Activated CD4-positive, alpha-beta T cell treated with anti-CD3 and anti-CD28 coated beads for 36 hours (primary cell): ENCODE measurements at regions of chr17 and their contacts with region 1.

Region 1: GRCh38 chr17:32253117-32253611 is 12.5 kb upstream of the RHBDL3 start:
- DNase-seq: peak; percentile 85
- ATAC-seq: peak; percentile 100
- H3K4me3 Mint-ChIP-seq: no peak overlapping the region
- H3K27ac Mint-ChIP-seq: no peak overlapping the region
- H3K4me1 Mint-ChIP-seq: no peaks in the 10 kb centered on the region
- H3K27me3 Mint-ChIP-seq: no peaks in the 10 kb centered on the region

Region 2: DNA sequence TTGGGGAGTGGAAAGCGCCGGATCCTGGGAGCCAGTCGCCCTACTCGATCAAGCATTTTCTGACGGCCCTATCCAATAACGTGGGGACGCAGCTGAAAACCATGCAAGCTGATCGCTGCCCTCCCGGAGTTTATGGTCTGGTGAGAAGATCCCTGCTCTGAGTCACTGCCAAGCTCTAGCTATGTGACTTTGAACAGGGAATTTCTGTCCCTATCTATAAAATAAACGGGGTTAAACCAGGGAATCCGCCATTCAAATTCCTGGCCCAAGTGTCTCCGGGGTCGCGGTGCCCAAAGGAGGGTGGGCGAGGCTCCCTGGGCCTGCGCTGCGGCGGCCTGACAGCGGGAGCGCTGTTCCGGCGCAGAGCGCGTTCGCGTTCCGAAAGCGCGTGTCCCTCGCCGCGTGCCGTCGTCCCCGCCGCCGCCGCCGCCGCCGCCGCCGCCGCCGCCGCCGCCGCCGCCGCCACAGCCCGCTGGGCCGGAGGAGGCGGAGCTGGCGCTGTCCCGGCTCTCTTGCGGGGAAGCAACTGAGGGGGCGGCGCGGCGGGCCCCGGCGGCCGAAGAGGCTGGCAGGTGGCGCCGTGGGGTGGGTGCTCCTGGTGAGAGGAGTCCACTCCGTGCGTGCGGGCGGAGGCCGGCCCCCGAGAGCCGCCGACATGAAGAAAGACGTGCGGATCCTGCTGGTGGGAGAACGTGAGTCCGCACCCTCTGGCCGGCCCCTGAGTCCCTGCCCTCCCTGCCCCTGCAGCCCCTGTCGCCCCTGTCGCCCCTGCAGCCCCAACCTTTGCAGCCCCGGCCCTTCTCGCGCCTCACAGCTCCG is 110.9 kb before region 1 on chr17 and contains the start of gene RHOT1:
- CTCF ChIA-PET with region 1: no interaction called
- POLR2A ChIA-PET with region 1: no interaction called
- intact Hi-C with region 1: no loop called
- DNase-seq: peak; percentile 85
- ATAC-seq: peak; percentile 64
- H3K4me3 Mint-ChIP-seq: peak within 1 kb of the TSS; percentile 99
- H3K27ac Mint-ChIP-seq: peak within 1 kb of the TSS; percentile 67
- H3K4me1 Mint-ChIP-seq: peaks cover 27% of the 10 kb centered on the region
- H3K27me3 Mint-ChIP-seq: no peaks in the 10 kb centered on the region
- total RNA-seq, gene RHOT1: 23.3 to 34.1 TPM

Region 3: GRCh38 chr17:32331243-32332040 is 78.3 kb after region 1 on chr17:
- CTCF ChIA-PET with region 1: interaction called, 10 read pairs
- POLR2A ChIA-PET with region 1: no interaction called
- intact Hi-C with region 1: no loop called
- DNase-seq: no peak
- ATAC-seq: peak; percentile 63
- H3K4me3 Mint-ChIP-seq: no peak overlapping the region
- H3K27ac Mint-ChIP-seq: peak overlapping the region; percentile 49
- H3K4me1 Mint-ChIP-seq: peaks cover 18% of the 10 kb centered on the region
- H3K27me3 Mint-ChIP-seq: no peaks in the 10 kb centered on the region

Region 4: DNA sequence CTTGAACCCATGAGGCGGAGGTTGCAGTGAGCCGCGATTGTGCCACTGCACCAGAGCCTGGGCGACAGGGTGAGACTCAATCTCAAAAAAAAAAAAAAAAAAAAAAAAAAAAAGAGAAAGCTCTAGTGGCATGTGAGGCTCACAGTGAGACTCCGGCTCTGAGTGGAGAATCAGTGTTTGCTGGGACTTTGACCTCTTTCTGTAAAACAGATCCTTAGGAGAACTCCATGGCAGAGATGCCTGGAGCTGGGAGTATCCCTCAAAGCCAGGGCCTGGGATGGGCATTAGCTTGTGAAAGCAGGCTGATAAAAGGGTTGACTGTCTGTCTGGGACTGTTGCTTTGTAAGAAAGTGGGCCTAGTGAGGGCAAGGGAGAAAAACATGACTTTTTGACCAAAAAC is 143.2 kb after region 1 on chr17:
- CTCF ChIA-PET with region 1: no interaction called
- POLR2A ChIA-PET with region 1: no interaction called
- intact Hi-C with region 1: loop called in 1 of 2 experiments (anchors 10 kb)
- DNase-seq: no peak
- ATAC-seq: no peak
- H3K4me3 Mint-ChIP-seq: no peak overlapping the region
- H3K27ac Mint-ChIP-seq: no peak overlapping the region
- H3K4me1 Mint-ChIP-seq: no peaks in the 10 kb centered on the region
- H3K27me3 Mint-ChIP-seq: no peaks in the 10 kb centered on the region